Posterior vena cava (tissue), 2 donors: ENCODE measurements at regions of chr4 and their contacts with region 1.

Region 1: DNA sequence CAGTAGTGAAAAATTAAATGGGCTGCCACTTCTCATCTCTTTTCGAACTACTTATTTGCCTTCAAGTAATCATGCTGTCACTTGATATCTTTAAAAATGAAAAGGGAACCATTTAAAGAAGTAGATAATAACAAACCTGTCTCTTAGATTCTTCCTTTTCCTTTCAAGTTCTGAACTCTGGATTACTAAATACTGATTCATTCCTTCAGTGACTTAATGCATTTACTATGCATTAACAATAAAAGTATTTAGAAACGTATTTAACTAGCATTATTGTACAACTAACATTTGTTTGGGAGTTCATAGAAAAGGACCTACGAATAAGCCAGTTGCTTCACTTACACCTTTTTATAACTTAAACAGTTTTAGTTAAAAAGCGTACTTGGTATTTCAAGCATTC is 61.1 kb upstream of the RAB33B start:
- DNase-seq: no peak

Region 2: GRCh38 chr4:139367421-139368090 is 25.2 kb before region 1 on chr4:
- intact Hi-C with region 1: loop called in 1 of 2 experiments (anchors 1 kb)
- DNase-seq: no peak

Region 3: GRCh38 chr4:139746431-139747171 is 353.8 kb after region 1 on chr4:
- intact Hi-C with region 1: no loop called
- DNase-seq: no peak